T-cell (primary cell): ENCODE measurements at regions of chr5 and their contacts with region 1.

Region 1: GRCh38 chr5:129125810-129126209 is 31.3 kb downstream of the ISOC1 start:
- DNase-seq: peak in 1 of 35 experiments; percentile 22
- ATAC-seq: peak in 1 of 4 experiments; percentile 44
- H3K4me3 ChIP-seq: no peak overlapping the region
- H3K4me3 Mint-ChIP-seq: peak overlapping the region; percentile 34 to 64 (median 39)
- H3K27ac ChIP-seq: peak overlapping the region; percentile 68
- H3K27ac Mint-ChIP-seq: peak overlapping the region; percentile 88 to 90
- H3K4me1 ChIP-seq: peaks cover 0 to 6% of the 10 kb centered on the region in 2 experiments
- H3K4me1 Mint-ChIP-seq: peaks cover 11 to 13% (median 13%) of the 10 kb centered on the region in 3 donors
- H3K27me3 ChIP-seq: no peaks in the 10 kb centered on the region
- H3K27me3 Mint-ChIP-seq: no peaks in the 10 kb centered on the region

Region 2: DNA sequence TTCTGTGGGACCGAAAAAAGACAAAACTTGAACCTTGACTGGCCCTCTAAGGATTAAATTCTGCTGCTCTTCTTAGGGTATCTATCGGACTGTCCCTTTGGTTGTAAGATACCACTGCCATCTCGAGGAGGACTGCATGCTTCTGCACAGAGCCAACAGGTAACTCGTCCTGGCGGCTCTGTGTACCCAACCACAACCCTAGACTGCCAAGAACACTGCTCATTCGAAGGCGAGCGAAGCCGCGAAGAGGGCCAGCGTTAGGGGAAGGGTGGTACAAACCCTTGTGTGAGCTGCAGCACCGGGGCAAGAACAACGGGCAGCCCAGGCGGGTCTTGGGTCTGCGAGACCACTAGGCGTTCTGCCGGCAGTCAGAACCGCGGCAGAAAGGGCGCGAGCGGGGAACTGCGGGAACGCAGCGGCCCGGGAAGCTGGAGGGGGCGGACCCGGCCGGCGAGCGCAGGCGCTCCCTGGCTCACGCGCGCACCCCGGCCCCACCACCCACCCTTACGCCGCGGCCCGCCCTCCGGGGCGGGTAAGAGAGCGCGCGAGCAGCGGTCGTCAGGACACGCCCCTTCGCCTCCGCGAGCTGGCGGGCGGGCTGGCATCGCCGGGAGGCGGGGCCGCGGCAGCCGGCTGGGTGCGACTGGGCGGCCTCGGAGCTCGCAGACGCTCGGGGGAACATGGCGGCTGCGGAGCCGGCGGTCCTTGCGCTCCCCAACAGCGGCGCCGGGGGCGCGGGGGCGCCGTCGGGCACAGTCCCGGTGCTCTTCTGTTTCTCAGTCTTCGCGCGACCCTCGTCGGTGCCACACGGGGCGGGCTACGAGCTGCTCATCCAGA is 31.5 kb before region 1 on chr5 and contains the start of gene ISOC1:
- CTCF ChIA-PET with region 1: interaction called, 3 to 27 read pairs
- POLR2A ChIA-PET with region 1: interaction called in 1 of 2 experiments, 11 read pairs
- DNase-seq: peak; percentile 80 to 95 (median 91)
- ATAC-seq: peak; percentile 89 to 94 (median 92)
- H3K4me3 ChIP-seq: peak within 1 kb of the TSS; percentile 85 to 89
- H3K4me3 Mint-ChIP-seq: peak within 1 kb of the TSS; percentile 85 to 90 (median 86)
- H3K27ac ChIP-seq: peak within 1 kb of the TSS; percentile 72
- H3K27ac Mint-ChIP-seq: peak within 1 kb of the TSS; percentile 84 to 90
- H3K4me1 ChIP-seq: peaks cover 14 to 22% of the 10 kb centered on the region in 2 experiments
- H3K4me1 Mint-ChIP-seq: peaks cover 34 to 38% (median 35%) of the 10 kb centered on the region in 3 donors
- H3K27me3 ChIP-seq: no peaks in the 10 kb centered on the region
- H3K27me3 Mint-ChIP-seq: peaks cover 11 to 15% of the 10 kb centered on the region in 2 donors
- total RNA-seq, gene ISOC1: 9.2 to 16.5 (median 13.6) TPM

Region 3: DNA sequence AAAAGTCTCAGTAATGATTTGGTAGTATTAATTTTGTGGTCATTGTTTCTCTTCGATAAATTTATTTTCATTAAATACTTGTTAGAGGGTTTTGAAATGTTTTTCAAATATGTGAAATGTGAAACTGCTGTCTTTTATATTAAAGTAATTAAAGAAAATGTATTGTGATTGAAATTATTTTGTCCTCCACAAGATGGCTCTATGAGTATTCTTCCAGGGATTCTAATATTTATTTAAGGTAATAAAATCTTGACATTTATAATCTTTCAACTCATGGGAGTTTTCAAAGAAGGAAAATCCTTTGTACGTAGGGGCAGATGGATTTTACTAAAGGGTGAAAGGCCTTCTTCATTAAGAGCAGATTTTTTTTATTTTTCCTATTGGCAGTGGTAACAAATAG is 11.9 kb before region 1 on chr5:
- CTCF ChIA-PET with region 1: interaction called in 1 of 2 experiments, 3 read pairs
- POLR2A ChIA-PET with region 1: interaction called in 1 of 2 experiments, 19 read pairs
- DNase-seq: no peak
- ATAC-seq: no peak
- H3K4me3 ChIP-seq: no peak overlapping the region
- H3K4me3 Mint-ChIP-seq: no peak overlapping the region
- H3K27ac ChIP-seq: no peak overlapping the region
- H3K27ac Mint-ChIP-seq: no peak overlapping the region
- H3K4me1 ChIP-seq: no peaks in the 10 kb centered on the region
- H3K4me1 Mint-ChIP-seq: peaks cover 0 to 5% (median 0%) of the 10 kb centered on the region in 3 donors
- H3K27me3 ChIP-seq: no peaks in the 10 kb centered on the region
- H3K27me3 Mint-ChIP-seq: no peaks in the 10 kb centered on the region

Region 4: DNA sequence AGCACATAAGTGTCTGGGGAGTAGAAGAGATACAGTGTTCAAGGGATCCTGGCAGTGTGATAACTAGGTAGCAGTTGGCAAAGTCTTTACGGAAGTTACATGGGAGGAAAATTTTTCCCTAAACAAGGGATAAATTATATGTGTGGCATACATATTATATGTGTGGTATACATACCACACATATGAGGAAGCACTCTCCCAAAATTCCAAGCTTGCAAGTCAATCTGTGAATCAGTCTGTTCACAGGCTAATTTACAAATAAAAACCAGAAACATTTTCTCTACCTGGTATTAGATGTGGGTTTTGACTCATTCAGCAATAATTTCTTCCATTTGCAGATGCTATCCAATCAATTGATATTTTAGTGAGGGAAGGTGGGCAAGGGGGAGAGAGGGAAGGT is 78.7 kb after region 1 on chr5:
- CTCF ChIA-PET with region 1: no interaction called
- POLR2A ChIA-PET with region 1: no interaction called
- DNase-seq: no peak
- ATAC-seq: no peak
- H3K4me3 ChIP-seq: no peak overlapping the region
- H3K4me3 Mint-ChIP-seq: no peak overlapping the region
- H3K27ac ChIP-seq: no peak overlapping the region
- H3K27ac Mint-ChIP-seq: no peak overlapping the region
- H3K4me1 ChIP-seq: no peaks in the 10 kb centered on the region
- H3K4me1 Mint-ChIP-seq: no peaks in the 10 kb centered on the region
- H3K27me3 ChIP-seq: no peaks in the 10 kb centered on the region
- H3K27me3 Mint-ChIP-seq: no peaks in the 10 kb centered on the region